Activated naive CD4-positive, alpha-beta T cell treated with anti-CD3 and anti-CD28 coated beads for 36 hours (primary cell): ENCODE measurements at regions of chr20 and their contacts with region 1.

Region 1: DNA sequence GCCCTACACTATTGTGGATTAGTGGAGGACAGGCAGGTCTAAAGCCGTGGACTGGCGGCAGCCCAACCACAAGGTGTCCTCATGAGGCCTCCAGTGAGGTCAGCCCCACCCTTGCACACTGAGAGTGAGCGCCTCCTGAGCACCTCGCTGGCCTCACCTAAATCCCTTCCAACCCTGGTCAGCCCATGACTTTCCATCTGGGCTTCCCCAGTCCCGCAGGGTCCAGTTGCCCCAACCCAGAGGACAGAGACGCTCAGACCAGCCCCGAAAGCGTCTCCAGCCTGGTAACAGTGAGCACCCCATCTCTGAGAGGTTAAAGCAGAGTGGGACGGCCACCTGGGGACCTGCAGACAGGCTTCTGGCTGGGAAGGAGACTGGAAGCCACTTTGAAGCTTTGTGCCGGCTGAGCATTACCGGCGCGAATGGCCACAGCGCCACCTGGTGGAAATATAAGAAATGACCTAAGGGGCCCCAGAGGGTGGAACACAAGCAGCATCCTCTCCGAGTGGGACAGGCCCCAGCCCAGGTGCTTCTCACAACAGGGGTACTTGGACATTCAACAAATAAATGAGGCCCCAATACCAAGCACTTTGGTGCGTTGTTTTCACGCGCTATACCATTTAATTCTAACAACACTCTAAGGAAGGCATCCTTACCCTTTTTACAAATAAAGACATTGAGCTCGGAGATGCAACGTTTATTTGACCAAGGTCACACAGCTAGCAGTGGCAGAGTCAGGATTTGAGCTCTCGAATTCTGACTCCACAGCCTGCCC is 65.7 kb upstream of the TOP1 start:
- DNase-seq: peak; percentile 80
- H3K4me3 Mint-ChIP-seq: no peak overlapping the region
- H3K27ac Mint-ChIP-seq: no peak overlapping the region
- H3K4me1 Mint-ChIP-seq: peaks cover 5% of the 10 kb centered on the region
- H3K27me3 Mint-ChIP-seq: no peaks in the 10 kb centered on the region

Region 2: GRCh38 chr20:39885975-39886649 is 1076.8 kb before region 1 on chr20:
- CTCF ChIA-PET with region 1: no interaction called
- intact Hi-C with region 1: loop called (anchors 2 kb)
- DNase-seq: peak; percentile 49
- H3K4me3 Mint-ChIP-seq: no peak overlapping the region
- H3K27ac Mint-ChIP-seq: no peak overlapping the region
- H3K4me1 Mint-ChIP-seq: no peaks in the 10 kb centered on the region
- H3K27me3 Mint-ChIP-seq: no peaks in the 10 kb centered on the region

Region 3: DNA sequence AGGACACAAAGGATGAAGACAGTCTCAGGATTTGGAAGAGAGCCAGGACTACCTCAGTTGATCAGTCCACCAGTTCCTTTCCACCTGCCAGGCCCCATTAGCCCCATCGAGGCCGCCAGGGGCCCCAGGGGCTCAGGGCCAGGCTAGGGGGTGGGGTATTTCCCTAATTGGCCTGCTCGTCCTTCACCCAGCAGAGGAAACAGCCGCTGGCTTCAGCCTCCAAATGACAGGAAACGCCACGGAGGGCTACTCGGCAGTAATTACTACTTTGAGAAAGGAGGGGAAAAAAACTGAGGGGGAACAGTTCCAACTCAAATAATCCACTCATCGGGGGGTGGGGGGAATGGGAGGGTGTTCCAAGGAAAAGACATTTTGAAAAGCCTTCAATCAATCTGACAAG is 316.6 kb before region 1 on chr20:
- CTCF ChIA-PET with region 1: no interaction called
- intact Hi-C with region 1: no loop called
- DNase-seq: no peak
- H3K4me3 Mint-ChIP-seq: no peak overlapping the region
- H3K27ac Mint-ChIP-seq: no peak overlapping the region
- H3K4me1 Mint-ChIP-seq: no peaks in the 10 kb centered on the region
- H3K27me3 Mint-ChIP-seq: peaks cover 11% of the 10 kb centered on the region

Region 4: DNA sequence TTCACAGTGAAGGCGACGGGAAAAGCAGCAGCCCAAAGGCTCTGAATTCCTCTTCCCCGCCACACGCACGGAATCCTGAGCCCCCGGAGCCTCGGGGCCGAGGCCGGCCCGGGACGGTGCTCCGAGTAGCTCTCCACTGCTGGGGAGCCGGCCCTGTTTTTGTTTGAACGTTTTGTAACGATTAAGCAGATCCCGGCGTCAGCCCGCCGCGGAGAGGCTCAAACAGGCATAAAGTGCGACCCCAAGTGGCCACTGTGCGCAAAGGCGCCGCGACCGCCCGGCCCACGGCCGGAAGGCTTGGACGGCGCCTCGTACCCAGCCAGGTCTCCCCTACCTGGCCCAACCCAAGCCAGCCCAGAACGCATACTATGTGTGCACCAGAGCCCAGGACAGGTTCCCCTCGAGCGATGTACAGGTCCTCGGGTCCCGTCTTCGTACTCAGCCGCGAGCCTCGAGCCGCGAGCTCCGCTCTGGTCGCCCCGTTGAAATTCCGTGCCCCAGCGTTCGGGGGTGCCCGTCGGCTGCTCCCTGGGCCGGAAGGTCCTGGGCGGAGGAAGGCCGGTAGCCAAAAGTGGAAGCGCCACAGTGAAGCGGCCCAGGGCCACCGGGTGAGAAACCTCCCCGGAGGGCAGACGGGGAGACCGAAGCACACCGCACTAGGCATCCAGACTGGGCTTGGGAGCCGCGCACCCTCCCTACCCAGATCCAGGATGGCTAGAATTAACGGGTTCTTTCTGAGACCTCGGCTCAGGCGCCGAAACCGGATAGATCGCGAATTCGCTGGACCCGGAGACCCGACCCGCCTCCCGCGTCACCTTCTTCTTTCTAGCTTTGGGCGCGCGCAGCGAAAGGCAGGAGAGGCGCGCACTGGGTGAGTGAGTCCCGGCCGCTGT is 272.7 kb before region 1 on chr20:
- CTCF ChIA-PET with region 1: no interaction called
- intact Hi-C with region 1: loop called (anchors 5 kb)
- DNase-seq: peak; percentile 85
- H3K4me3 Mint-ChIP-seq: peak overlapping the region; percentile 64
- H3K27ac Mint-ChIP-seq: no peak overlapping the region
- H3K4me1 Mint-ChIP-seq: peaks cover 11% of the 10 kb centered on the region
- H3K27me3 Mint-ChIP-seq: peaks cover 76% of the 10 kb centered on the region

Region 5: DNA sequence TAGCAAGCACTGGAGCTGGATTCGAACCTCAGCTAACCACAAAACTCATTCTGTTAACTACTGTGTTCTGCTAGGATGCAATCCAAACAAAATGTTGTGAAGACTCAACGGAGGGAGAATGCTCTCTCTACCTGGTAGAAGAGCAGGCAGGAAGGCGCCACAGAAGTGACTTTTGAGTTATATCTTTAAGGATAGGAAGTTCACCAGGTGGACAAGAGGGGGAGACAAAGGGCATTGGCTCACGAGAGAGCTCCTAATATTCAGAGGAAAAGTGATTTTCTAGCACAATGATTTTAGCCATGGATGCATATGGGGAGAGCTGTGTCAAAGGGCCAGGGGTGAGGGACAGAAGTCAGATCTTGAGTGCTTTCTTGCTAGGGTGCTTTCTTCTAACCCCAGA is 165.5 kb before region 1 on chr20:
- CTCF ChIA-PET with region 1: interaction called, 13 read pairs
- intact Hi-C with region 1: loop called (anchors 1 kb)
- DNase-seq: no peak
- H3K4me3 Mint-ChIP-seq: no peak overlapping the region
- H3K27ac Mint-ChIP-seq: no peak overlapping the region
- H3K4me1 Mint-ChIP-seq: no peaks in the 10 kb centered on the region
- H3K27me3 Mint-ChIP-seq: no peaks in the 10 kb centered on the region

Region 6: GRCh38 chr20:41057999-41058896 is 95.3 kb after region 1 on chr20:
- CTCF ChIA-PET with region 1: no interaction called
- intact Hi-C with region 1: no loop called
- DNase-seq: peak; percentile 56
- H3K4me3 Mint-ChIP-seq: no peak overlapping the region
- H3K27ac Mint-ChIP-seq: peak overlapping the region; percentile 54
- H3K4me1 Mint-ChIP-seq: peaks cover 52% of the 10 kb centered on the region
- H3K27me3 Mint-ChIP-seq: no peaks in the 10 kb centered on the region

Region 7: GRCh38 chr20:41534842-41535241 is 571.9 kb after region 1 on chr20:
- CTCF ChIA-PET with region 1: no interaction called
- intact Hi-C with region 1: no loop called
- DNase-seq: no peak
- H3K4me3 Mint-ChIP-seq: no peak overlapping the region
- H3K27ac Mint-ChIP-seq: no peak overlapping the region
- H3K4me1 Mint-ChIP-seq: peaks cover 4% of the 10 kb centered on the region
- H3K27me3 Mint-ChIP-seq: no peaks in the 10 kb centered on the region